Endothelial cell of umbilical vein (primary cell): ENCODE measurements at regions of chr16 and their contacts with region 1.

Region 1: GRCh38 chr16:67719048-67719777 is at the start of gene GFOD2:
- DNase-seq: peak; percentile 98
- H3K4me3 ChIP-seq: peak within 1 kb of the TSS; percentile 78 to 93 (median 91)
- H3K27ac ChIP-seq: peak within 1 kb of the TSS; percentile 81
- H3K4me1 ChIP-seq: peaks cover 23% of the 10 kb centered on the region
- H3K27me3 ChIP-seq: no peaks in the 10 kb centered on the region
- CTCF ChIP-seq: no peak
- POLR2A ChIP-seq: peak; percentile 97
- total RNA-seq, gene GFOD2: 43.7 and 47.5 TPM in 2 replicates

Region 2: DNA sequence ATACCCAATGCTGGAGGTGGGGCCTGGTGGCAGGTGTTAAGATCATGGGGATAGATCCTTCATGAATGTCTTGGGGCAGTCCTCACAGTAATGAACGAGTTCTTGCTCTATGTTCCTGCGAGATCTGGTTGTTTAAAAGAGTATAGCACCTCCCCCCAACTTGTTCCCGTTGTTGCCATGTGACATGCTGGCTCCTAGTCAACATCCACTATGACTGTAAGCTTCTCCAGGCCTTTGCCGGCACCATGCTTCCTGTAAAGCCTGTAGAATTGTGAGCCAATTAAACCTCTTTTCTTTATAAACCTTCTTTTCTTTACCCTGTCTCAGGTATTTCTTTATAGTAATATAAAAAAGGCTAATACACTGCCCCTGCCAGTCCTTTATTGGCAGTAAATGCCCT is 53.9 kb after region 1 on chr16:
- CTCF ChIA-PET with region 1: interaction called, 3 read pairs
- POLR2A ChIA-PET with region 1: no interaction called
- dilution Hi-C with region 1: no loop called
- intact Hi-C with region 1: loop called (anchors 2 kb)
- DNase-seq: peak; percentile 86
- H3K4me3 ChIP-seq: no peak overlapping the region
- H3K27ac ChIP-seq: peak overlapping the region; percentile 72
- H3K4me1 ChIP-seq: peaks cover 53% of the 10 kb centered on the region
- H3K27me3 ChIP-seq: no peaks in the 10 kb centered on the region
- CTCF ChIP-seq: no peak
- POLR2A ChIP-seq: no peak